Mammary epithelial cell (primary cell): ENCODE measurements at regions of chrX and their contacts with region 1.

Region 1: GRCh38 chrX:136200466-136200865 is 50.7 kb downstream of the MAP7D3 start:
- DNase-seq: peak; percentile 11
- H3K4me3 ChIP-seq: no peak overlapping the region
- H3K27ac ChIP-seq: no peak overlapping the region
- H3K4me1 ChIP-seq: no peaks in the 10 kb centered on the region
- H3K27me3 ChIP-seq: no peaks in the 10 kb centered on the region
- CTCF ChIP-seq: peak in 1 of 2 donors; percentile 40

Region 2: GRCh38 chrX:136055651-136056221 is 144.7 kb before region 1 on chrX:
- CTCF ChIA-PET with region 1: no interaction called
- dilution Hi-C with region 1: no loop called
- in situ Hi-C with region 1: no loop called
- intact Hi-C with region 1: no loop called
- DNase-seq: no peak
- H3K4me3 ChIP-seq: no peak overlapping the region
- H3K27ac ChIP-seq: no peak overlapping the region
- H3K4me1 ChIP-seq: no peaks in the 10 kb centered on the region
- H3K27me3 ChIP-seq: no peaks in the 10 kb centered on the region
- CTCF ChIP-seq: no peak

Region 3: GRCh38 chrX:136147315-136147901 is 53.1 kb before region 1 on chrX and contains the start of gene FHL1:
- CTCF ChIA-PET with region 1: no interaction called
- dilution Hi-C with region 1: no loop called
- in situ Hi-C with region 1: no loop called
- intact Hi-C with region 1: no loop called
- DNase-seq: no peak
- H3K4me3 ChIP-seq: peak within 1 kb of the TSS; percentile 31 to 55 (median 55)
- H3K27ac ChIP-seq: no peak within 1 kb of the TSS
- H3K4me1 ChIP-seq: no peaks in the 10 kb centered on the region
- H3K27me3 ChIP-seq: peaks cover 2% of the 10 kb centered on the region
- CTCF ChIP-seq: no peak
- total RNA-seq, gene FHL1: 1.3 to 82.8 TPM

Region 4: GRCh38 chrX:136168929-136169735 is 31.3 kb before region 1 on chrX:
- CTCF ChIA-PET with region 1: no interaction called
- dilution Hi-C with region 1: no loop called
- in situ Hi-C with region 1: no loop called
- intact Hi-C with region 1: loop called (anchors 5 kb)
- DNase-seq: peak; percentile 18
- H3K4me3 ChIP-seq: no peak overlapping the region
- H3K27ac ChIP-seq: no peak overlapping the region
- H3K4me1 ChIP-seq: no peaks in the 10 kb centered on the region
- H3K27me3 ChIP-seq: no peaks in the 10 kb centered on the region
- CTCF ChIP-seq: no peak